Caco-2 (cell line): ENCODE measurements at regions of chr2 and their contacts with region 1.

Region 1: GRCh38 chr2:32330136-32330535 is 26.7 kb upstream of the BIRC6 start:
- DNase-seq: no peak
- H3K4me3 ChIP-seq: no peak overlapping the region
- H3K4me3 Mint-ChIP-seq: peak overlapping the region; percentile 46
- H3K27ac Mint-ChIP-seq: peak overlapping the region; percentile 18
- H3K4me1 ChIP-seq: peaks cover 28% of the 10 kb centered on the region
- H3K4me1 Mint-ChIP-seq: peaks cover 35% of the 10 kb centered on the region
- H3K27me3 ChIP-seq: no peaks in the 10 kb centered on the region
- H3K27me3 Mint-ChIP-seq: no peaks in the 10 kb centered on the region
- CTCF ChIP-seq: no peak

Region 2: GRCh38 chr2:32159678-32160077 is 170.5 kb before region 1 on chr2:
- CTCF ChIA-PET with region 1: no interaction called
- POLR2A ChIA-PET with region 1: no interaction called
- intact Hi-C with region 1: no loop called
- DNase-seq: no peak
- H3K4me3 ChIP-seq: no peak overlapping the region
- H3K4me3 Mint-ChIP-seq: no peak overlapping the region
- H3K27ac Mint-ChIP-seq: no peak overlapping the region
- H3K4me1 ChIP-seq: 0 out of 2 replicates have a peak, but pooled peaks cover 4% of the 10 kb centered on the region
- H3K4me1 Mint-ChIP-seq: no peaks in the 10 kb centered on the region
- H3K27me3 ChIP-seq: no peaks in the 10 kb centered on the region
- H3K27me3 Mint-ChIP-seq: no peaks in the 10 kb centered on the region
- CTCF ChIP-seq: no peak

Region 3: GRCh38 chr2:32229659-32230058 is 100.5 kb before region 1 on chr2:
- CTCF ChIA-PET with region 1: no interaction called
- POLR2A ChIA-PET with region 1: no interaction called
- intact Hi-C with region 1: loop called (anchors 5 kb)
- DNase-seq: no peak
- H3K4me3 ChIP-seq: no peak overlapping the region
- H3K4me3 Mint-ChIP-seq: no peak overlapping the region
- H3K27ac Mint-ChIP-seq: peak overlapping the region; percentile 8
- H3K4me1 ChIP-seq: peaks cover 31% of the 10 kb centered on the region
- H3K4me1 Mint-ChIP-seq: peaks cover 30% of the 10 kb centered on the region
- H3K27me3 ChIP-seq: no peaks in the 10 kb centered on the region
- H3K27me3 Mint-ChIP-seq: no peaks in the 10 kb centered on the region
- CTCF ChIP-seq: no peak

Region 4: GRCh38 chr2:32356735-32357644 is 26.9 kb after region 1 on chr2 and contains the start of gene BIRC6:
- CTCF ChIA-PET with region 1: no interaction called
- POLR2A ChIA-PET with region 1: no interaction called
- intact Hi-C with region 1: loop called (anchors 1 kb)
- DNase-seq: peak; percentile 99 to 100
- H3K4me3 ChIP-seq: peak within 1 kb of the TSS; percentile 100
- H3K4me3 Mint-ChIP-seq: peak within 1 kb of the TSS; percentile 82
- H3K27ac Mint-ChIP-seq: peak within 1 kb of the TSS; percentile 78
- H3K4me1 ChIP-seq: peaks cover 16% of the 10 kb centered on the region
- H3K4me1 Mint-ChIP-seq: peaks cover 30% of the 10 kb centered on the region
- H3K27me3 ChIP-seq: no peaks in the 10 kb centered on the region
- H3K27me3 Mint-ChIP-seq: no peaks in the 10 kb centered on the region
- CTCF ChIP-seq: no peak
- total RNA-seq, gene BIRC6: 96.7 and 100 TPM in 2 replicates

Region 5: DNA sequence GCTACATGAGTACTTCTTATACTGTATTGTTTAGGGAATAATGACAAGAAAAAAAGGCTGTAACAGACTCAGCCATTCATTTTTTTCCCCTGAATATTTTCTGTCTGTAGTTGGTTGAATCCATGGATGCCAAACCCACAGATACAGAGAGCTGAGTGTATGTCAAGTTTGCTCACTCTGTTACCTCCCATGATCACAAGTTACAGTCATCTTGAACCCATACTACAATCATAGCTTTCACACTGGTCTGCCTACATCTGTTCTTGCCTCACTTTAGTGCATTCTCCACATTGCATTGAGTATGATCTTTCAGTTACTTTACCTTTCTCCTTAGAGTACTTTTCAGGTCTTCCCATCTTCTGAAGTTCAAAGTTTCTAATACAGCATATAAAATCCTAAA is 120.7 kb after region 1 on chr2:
- CTCF ChIA-PET with region 1: no interaction called
- POLR2A ChIA-PET with region 1: no interaction called
- intact Hi-C with region 1: no loop called
- DNase-seq: no peak
- H3K4me3 ChIP-seq: no peak overlapping the region
- H3K4me3 Mint-ChIP-seq: no peak overlapping the region
- H3K27ac Mint-ChIP-seq: no peak overlapping the region
- H3K4me1 ChIP-seq: no peaks in the 10 kb centered on the region
- H3K4me1 Mint-ChIP-seq: no peaks in the 10 kb centered on the region
- H3K27me3 ChIP-seq: no peaks in the 10 kb centered on the region
- H3K27me3 Mint-ChIP-seq: no peaks in the 10 kb centered on the region
- CTCF ChIP-seq: no peak